HepG2 (cell line): ENCODE measurements at regions of chr11 and their contacts with region 1.

Region 1: GRCh38 chr11:117226388-117227385 is 5.2 kb downstream of the PCSK7 start:
- DNase-seq: peak; percentile 81
- ATAC-seq: peak; percentile 89
- H3K4me3 ChIP-seq: no peak overlapping the region
- H3K27ac ChIP-seq: no peak overlapping the region
- H3K4me1 ChIP-seq: peaks cover 32% of the 10 kb centered on the region
- H3K27me3 ChIP-seq: no peaks in the 10 kb centered on the region
- CTCF ChIP-seq: peak; percentile 91
- EP300 ChIP-seq: no peak
- POLR2A ChIP-seq: no peak
- RAD21 ChIP-seq: peak; percentile 73; the same call in 1 of the 2 replicates

Region 2: DNA sequence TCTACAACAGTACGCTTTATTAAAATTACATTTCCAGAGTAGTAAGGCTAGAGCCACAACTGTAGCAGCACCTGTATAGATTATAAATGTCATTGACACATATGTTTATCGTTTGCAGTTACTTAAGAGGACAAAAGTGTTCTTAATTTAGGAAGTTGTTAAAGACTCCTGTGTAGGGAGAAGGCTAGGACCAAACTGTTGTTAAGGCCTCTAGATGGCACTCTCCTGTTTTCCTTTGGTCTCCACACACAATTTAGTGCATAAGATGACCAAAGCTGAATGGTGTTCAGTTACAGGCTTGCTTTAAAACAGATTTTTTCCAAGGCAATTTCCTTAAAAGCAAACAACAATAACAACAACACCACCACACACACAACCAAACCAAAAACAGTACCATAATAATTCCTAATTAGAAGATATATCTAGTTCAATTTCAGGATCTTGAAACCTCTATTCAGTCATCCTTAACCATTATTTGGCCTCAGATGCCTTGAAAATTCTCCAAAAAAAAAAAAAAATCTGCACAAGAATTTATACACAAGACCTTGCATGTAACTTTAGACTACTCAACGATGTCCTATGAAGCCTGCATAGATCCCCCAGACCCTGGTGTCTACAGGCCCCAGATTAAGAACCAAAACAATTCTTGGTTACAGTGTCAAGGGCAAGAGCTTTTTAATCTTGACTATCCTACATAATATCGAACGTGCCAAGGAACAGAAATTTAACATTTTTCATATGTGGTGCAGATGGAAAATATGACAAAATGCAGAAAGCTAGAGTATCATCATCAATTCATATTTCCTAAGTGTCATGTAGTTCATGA is 346.7 kb before region 1 on chr11:
- CTCF ChIA-PET with region 1: no interaction called
- POLR2A ChIA-PET with region 1: no interaction called
- in situ Hi-C with region 1: no loop called
- intact Hi-C with region 1: loop called (anchors 1 kb)
- DNase-seq: peak; percentile 65
- ATAC-seq: peak; percentile 91
- H3K4me3 ChIP-seq: no peak overlapping the region
- H3K27ac ChIP-seq: no peak overlapping the region
- H3K4me1 ChIP-seq: no peaks in the 10 kb centered on the region
- H3K27me3 ChIP-seq: no peaks in the 10 kb centered on the region
- CTCF ChIP-seq: peak; percentile 81
- EP300 ChIP-seq: no peak
- POLR2A ChIP-seq: no peak
- RAD21 ChIP-seq: peak; percentile 67

Region 3: DNA sequence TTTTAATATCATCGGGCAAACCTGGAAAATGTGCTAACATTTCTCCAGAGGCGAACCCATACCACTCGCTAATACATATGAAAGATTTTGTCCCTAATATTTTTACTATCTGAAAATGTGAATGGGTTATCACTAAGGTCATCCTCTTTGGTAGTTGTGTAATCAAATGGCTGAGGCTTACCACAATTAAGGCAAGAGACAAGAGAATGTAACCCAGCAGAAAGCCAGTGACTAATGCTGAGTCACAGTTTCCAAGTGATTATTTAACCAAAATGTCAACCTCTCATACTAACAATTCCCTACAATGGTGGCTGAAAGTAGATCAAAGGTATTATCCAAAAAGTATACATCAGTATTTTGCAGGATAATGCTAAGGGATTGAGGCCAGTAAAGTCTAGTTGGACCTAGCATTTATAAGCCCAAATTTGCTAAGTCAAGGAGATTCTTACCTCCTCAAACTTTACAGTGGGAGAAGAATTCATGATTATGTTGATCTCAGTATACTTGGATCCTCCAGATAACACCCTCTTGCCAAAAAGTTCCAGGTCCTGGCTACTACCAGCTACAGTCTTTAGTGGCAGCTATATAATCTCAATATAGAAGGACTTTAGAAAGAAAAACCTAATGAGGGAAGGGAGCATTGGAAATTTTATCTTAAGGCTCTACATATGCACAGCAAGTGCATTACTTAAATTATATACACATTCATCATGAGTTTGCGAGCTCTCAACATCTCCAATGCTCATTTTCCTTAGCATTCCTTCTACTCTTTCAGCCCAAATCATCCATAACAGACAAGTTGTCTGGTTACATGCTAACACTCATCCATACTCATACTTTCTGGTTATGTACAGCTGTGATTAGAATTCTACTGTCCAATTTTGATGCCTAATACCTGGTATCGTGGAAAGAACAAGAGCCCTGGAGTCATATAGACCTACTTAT is 153.9 kb before region 1 on chr11:
- CTCF ChIA-PET with region 1: no interaction called
- POLR2A ChIA-PET with region 1: no interaction called
- in situ Hi-C with region 1: no loop called
- intact Hi-C with region 1: no loop called
- DNase-seq: peak; percentile 93
- ATAC-seq: peak; percentile 38
- H3K4me3 ChIP-seq: no peak overlapping the region
- H3K27ac ChIP-seq: no peak overlapping the region
- H3K4me1 ChIP-seq: peaks cover 68% of the 10 kb centered on the region
- H3K27me3 ChIP-seq: no peaks in the 10 kb centered on the region
- CTCF ChIP-seq: no peak
- EP300 ChIP-seq: peak; percentile 71 to 89
- POLR2A ChIP-seq: no peak
- RAD21 ChIP-seq: no peak

Region 4: GRCh38 chr11:117107701-117108590 is 118.7 kb before region 1 on chr11:
- CTCF ChIA-PET with region 1: no interaction called
- POLR2A ChIA-PET with region 1: no interaction called
- in situ Hi-C with region 1: no loop called
- intact Hi-C with region 1: loop called (anchors 10 kb)
- DNase-seq: no peak
- ATAC-seq: no peak
- H3K4me3 ChIP-seq: no peak overlapping the region; a peak in 1 of 6 replicates
- H3K27ac ChIP-seq: no peak overlapping the region
- H3K4me1 ChIP-seq: peaks cover 15% of the 10 kb centered on the region
- H3K27me3 ChIP-seq: no peaks in the 10 kb centered on the region
- CTCF ChIP-seq: no peak
- EP300 ChIP-seq: no peak
- POLR2A ChIP-seq: no peak
- RAD21 ChIP-seq: no peak

Region 5: GRCh38 chr11:117178210-117179034 is 48.3 kb before region 1 on chr11 and contains the start of gene SIDT2:
- CTCF ChIA-PET with region 1: interaction called, 32 read pairs
- POLR2A ChIA-PET with region 1: interaction called, 4 read pairs
- in situ Hi-C with region 1: loop called (anchors 5 kb)
- intact Hi-C with region 1: loop called (anchors 1 kb)
- DNase-seq: peak; percentile 83
- ATAC-seq: peak; percentile 90
- H3K4me3 ChIP-seq: peak within 1 kb of the TSS; percentile 82 to 97 (median 83)
- H3K27ac ChIP-seq: peak within 1 kb of the TSS; percentile 73
- H3K4me1 ChIP-seq: peaks cover 38% of the 10 kb centered on the region
- H3K27me3 ChIP-seq: no peaks in the 10 kb centered on the region; a peak in 1 of 5 replicates
- CTCF ChIP-seq: no peak
- EP300 ChIP-seq: no peak
- POLR2A ChIP-seq: peak; percentile 51 to 65
- RAD21 ChIP-seq: no peak
- total RNA-seq, gene SIDT2: 6.8 and 11.5 TPM in 2 replicates

Region 6: GRCh38 chr11:117200813-117201657 is 25.7 kb before region 1 on chr11:
- CTCF ChIA-PET with region 1: interaction called, 7 read pairs
- POLR2A ChIA-PET with region 1: no interaction called
- in situ Hi-C with region 1: no loop called
- intact Hi-C with region 1: loop called (anchors 1 kb)
- DNase-seq: no peak
- ATAC-seq: no peak
- H3K4me3 ChIP-seq: no peak overlapping the region
- H3K27ac ChIP-seq: no peak overlapping the region
- H3K4me1 ChIP-seq: peaks cover 9% of the 10 kb centered on the region
- H3K27me3 ChIP-seq: no peaks in the 10 kb centered on the region
- CTCF ChIP-seq: no peak
- EP300 ChIP-seq: no peak
- POLR2A ChIP-seq: no peak
- RAD21 ChIP-seq: no peak